AG04449 (cell line): ENCODE measurements at regions of chr17 and their contacts with region 1.

Region 1: GRCh38 chr17:27601069-27601975 is 29.7 kb upstream of the LGALS9 start:
- DNase-seq: no peak
- H3K4me3 ChIP-seq: no peak overlapping the region
- CTCF ChIP-seq: peak; percentile 85

Region 2: GRCh38 chr17:27199948-27200347 is 401.4 kb before region 1 on chr17:
- CTCF ChIA-PET with region 1: interaction called, 46 read pairs
- POLR2A ChIA-PET with region 1: no interaction called
- DNase-seq: no peak
- H3K4me3 ChIP-seq: no peak overlapping the region
- CTCF ChIP-seq: no peak

Region 3: GRCh38 chr17:27353461-27354050 is 247.8 kb before region 1 on chr17:
- CTCF ChIA-PET with region 1: interaction called, 634 read pairs
- POLR2A ChIA-PET with region 1: interaction called, 3 read pairs
- DNase-seq: peak; percentile 19
- H3K4me3 ChIP-seq: peak overlapping the region; percentile 64
- CTCF ChIP-seq: peak; percentile 57

Region 4: GRCh38 chr17:27430882-27431491 is 170.3 kb before region 1 on chr17:
- CTCF ChIA-PET with region 1: interaction called, 26 read pairs
- POLR2A ChIA-PET with region 1: no interaction called
- DNase-seq: no peak
- H3K4me3 ChIP-seq: no peak overlapping the region
- CTCF ChIP-seq: peak; percentile 83

Region 5: GRCh38 chr17:27533856-27534815 is 67.2 kb before region 1 on chr17:
- CTCF ChIA-PET with region 1: interaction called, 14 read pairs
- POLR2A ChIA-PET with region 1: no interaction called
- DNase-seq: peak; percentile 84
- H3K4me3 ChIP-seq: no peak overlapping the region
- CTCF ChIP-seq: no peak

Region 6: DNA sequence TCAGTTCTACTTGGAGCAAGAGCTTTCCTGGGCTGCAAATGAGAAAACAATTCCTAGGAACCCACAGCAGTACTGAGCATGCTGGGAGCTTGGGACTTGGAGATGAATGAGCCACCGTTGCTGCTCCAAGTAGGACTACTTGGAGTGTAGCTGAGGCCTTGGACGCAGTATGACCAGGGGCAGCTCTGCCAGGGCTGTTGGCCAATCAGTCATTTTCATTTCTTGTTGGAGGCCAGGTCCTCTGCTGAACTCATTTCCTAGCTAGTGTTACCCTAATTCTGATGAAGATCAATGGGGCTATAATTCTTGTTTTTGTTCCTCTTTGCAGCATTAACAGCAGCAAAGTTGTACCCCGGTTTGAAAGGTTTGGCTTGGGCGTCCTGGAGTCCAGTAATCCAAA is 21.7 kb after region 1 on chr17:
- CTCF ChIA-PET with region 1: interaction called, 151 read pairs
- POLR2A ChIA-PET with region 1: no interaction called
- DNase-seq: no peak
- H3K4me3 ChIP-seq: no peak overlapping the region
- CTCF ChIP-seq: no peak